Posterior vena cava (tissue), 2 donors: ENCODE measurements at regions of chr9 and their contacts with region 1.

Region 1: DNA sequence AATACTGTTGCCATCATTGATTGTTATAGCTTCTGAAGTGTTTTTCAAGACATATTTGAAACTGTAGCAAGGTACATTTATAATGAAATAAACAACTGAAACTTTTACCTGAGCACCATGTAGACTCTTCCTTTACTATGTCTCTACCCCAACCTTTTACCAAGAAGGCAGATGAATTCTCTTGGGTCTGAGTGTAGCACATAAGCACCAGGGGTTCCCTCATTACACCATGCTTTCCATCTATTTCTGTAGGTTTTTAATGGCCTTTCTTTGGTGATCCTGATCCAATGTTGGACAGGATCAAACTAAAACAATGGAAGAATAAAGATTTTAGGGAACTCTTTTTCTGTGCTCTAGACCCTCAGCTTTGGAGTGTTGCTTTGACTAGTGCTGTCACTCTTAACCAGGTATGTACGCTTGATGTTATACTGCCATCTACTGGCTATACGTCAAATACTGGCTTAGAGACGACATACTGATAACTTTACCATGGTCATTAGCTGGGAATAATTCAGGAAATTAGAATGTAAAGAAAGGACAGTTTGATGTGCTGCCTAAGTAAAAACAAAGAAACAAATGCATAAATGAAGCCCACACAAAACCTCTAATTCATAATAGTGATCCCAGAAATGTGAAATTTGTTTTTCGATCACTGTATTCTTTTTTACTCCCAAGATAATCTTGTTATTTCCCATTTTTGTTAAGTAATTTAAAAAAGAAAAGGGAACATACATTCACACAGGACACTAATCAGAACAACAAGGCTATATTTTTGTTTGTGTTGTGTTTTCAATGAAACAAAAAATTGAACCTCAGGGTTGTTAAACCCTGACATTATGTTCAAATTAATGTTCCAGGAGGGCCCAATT is 30.7 kb downstream of the IFNW1 start:
- DNase-seq: no peak

Region 2: GRCh38 chr9:19925817-19926503 is 1185.0 kb before region 1 on chr9:
- intact Hi-C with region 1: loop called (anchors 10 kb)
- DNase-seq: no peak

Region 3: GRCh38 chr9:20962536-20963225 is 148.3 kb before region 1 on chr9:
- intact Hi-C with region 1: no loop called
- DNase-seq: no peak

Region 4: GRCh38 chr9:21047281-21047691 is 63.7 kb before region 1 on chr9:
- intact Hi-C with region 1: no loop called
- DNase-seq: no peak

Region 5: GRCh38 chr9:22265038-22265437 is 1154.1 kb after region 1 on chr9:
- intact Hi-C with region 1: no loop called
- DNase-seq: no peak